GM10248 (cell line): ENCODE measurements at regions of chr6 and their contacts with region 1.

Region 1: GRCh38 chr6:7314414-7314813 is 1.4 kb upstream of the SSR1 start:
- DNase-seq: no peak
- CTCF ChIP-seq: no peak

Region 2: DNA sequence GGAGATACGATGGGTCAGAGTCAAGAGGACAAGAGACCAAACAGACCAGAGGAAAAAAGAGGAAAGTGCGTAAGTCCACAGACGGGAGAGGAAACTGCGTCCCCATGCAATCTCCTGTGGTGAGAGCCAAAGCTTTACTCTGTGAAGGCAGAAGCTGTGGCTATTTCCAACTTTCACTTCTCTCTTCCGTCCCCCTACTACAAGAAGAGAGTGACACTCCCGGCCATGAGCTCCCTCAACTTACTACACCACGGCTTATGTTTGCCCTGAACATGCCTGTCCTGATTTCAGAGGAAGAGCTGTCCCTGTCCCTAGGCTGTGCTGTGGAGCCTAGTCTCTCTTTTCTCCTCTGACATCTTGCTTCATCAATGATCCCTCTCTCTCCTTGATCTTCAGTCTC is 10.1 kb after region 1 on chr6:
- CTCF ChIA-PET with region 1: interaction called, 10 read pairs
- POLR2A ChIA-PET with region 1: no interaction called
- DNase-seq: peak; percentile 41
- CTCF ChIP-seq: no peak